OCI-LY7 (cell line): ENCODE measurements at regions of chr13 and their contacts with region 1.

Region 1: DNA sequence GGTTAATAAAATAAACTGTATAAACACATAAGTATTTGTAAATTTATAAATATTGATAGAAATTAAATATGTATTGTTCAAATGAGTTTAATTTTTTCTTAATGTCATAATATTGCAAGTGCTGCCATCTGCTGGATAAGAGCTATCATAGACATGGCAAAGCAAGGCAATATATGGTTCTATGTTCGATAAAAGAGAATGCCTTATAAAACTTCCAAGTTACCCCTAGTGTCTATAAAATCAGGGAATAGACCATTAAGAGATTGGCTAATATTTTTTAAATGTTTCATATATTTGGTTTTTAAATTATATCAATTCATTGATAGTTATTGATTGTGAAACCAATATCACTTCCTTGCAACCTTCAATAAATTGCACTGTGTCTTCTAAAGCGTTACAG is 28.9 kb upstream of the SLITRK6 start:
- DNase-seq: peak; percentile 50
- H3K4me3 ChIP-seq: no peak overlapping the region
- H3K27ac ChIP-seq: no peak overlapping the region
- H3K4me1 ChIP-seq: no peaks in the 10 kb centered on the region
- CTCF ChIP-seq: peak; percentile 93

Region 2: DNA sequence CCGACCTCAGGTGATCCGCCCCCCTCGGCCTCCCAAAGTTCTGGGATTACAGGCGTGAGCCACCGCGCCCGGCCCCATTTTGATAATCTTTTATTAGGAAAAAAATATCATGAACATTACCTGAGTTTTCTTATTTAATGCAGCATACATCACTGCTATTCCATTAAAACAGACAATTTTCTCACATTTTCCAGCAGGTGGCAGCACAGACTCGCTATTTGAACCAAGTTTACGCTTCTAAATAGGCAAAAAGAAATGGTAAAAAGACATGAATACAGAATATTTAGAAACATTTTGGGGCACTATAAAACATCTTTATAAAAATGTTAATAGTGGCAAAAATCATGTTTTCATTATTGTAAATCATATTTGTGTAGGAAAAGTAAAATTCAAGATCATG is 932.0 kb before region 1 on chr13:
- CTCF ChIA-PET with region 1: interaction called, 3 read pairs
- POLR2A ChIA-PET with region 1: no interaction called
- intact Hi-C with region 1: loop called (anchors 1 kb)
- DNase-seq: peak; percentile 75
- H3K4me3 ChIP-seq: no peak overlapping the region
- H3K27ac ChIP-seq: no peak overlapping the region
- H3K4me1 ChIP-seq: no peaks in the 10 kb centered on the region
- CTCF ChIP-seq: peak; percentile 97